Endothelial cell of umbilical vein (primary cell): ENCODE measurements at regions of chr1 and their contacts with region 1.

Region 1: DNA sequence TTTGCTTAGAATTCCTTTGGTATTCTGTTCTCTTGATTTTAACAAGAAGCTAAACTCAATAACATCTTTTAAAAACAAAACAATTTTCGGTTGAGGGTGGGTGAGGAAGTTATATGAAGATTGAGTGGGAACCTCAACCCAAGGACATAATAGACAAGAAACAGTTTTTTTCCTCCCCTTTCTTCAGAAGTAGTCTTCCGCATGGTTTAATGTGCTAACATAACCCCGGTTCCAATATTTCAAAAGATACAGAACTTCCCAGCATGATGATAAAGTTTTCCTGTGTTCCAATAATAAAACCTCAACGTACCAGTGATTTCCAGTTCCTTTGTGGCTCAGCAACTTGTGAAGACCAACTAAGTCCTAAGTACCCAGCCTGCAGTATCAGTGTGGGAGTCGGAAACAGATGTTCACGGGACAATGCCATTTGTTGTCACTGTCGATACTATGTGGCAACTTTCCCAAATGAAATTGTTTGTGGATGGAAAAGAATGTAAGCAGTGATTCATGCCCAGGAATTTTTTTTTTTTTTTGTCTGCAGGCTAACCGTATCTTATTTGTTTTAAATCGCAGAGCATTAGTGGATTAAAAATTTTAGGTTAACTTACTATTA is 48.5 kb downstream of the NR5A2 start:
- DNase-seq: peak; percentile 99
- H3K4me3 ChIP-seq: peak overlapping the region in 1 of 3 experiments; percentile 50
- H3K27ac ChIP-seq: peak overlapping the region; percentile 94
- H3K4me1 ChIP-seq: peaks cover 45% of the 10 kb centered on the region
- H3K27me3 ChIP-seq: no peaks in the 10 kb centered on the region
- CTCF ChIP-seq: no peak
- POLR2A ChIP-seq: peak; percentile 53

Region 2: GRCh38 chr1:199691540-199691939 is 384.5 kb before region 1 on chr1:
- CTCF ChIA-PET with region 1: no interaction called
- POLR2A ChIA-PET with region 1: no interaction called
- dilution Hi-C with region 1: no loop called
- intact Hi-C with region 1: loop called (anchors 1 kb)
- DNase-seq: peak; percentile 98
- H3K4me3 ChIP-seq: no peak overlapping the region
- H3K27ac ChIP-seq: peak overlapping the region; percentile 89
- H3K4me1 ChIP-seq: peaks cover 49% of the 10 kb centered on the region
- H3K27me3 ChIP-seq: no peaks in the 10 kb centered on the region
- CTCF ChIP-seq: peak in 1 of 2 donors; percentile 5
- POLR2A ChIP-seq: peak; percentile 81

Region 3: GRCh38 chr1:199780948-199781347 is 295.1 kb before region 1 on chr1:
- CTCF ChIA-PET with region 1: no interaction called
- POLR2A ChIA-PET with region 1: no interaction called
- dilution Hi-C with region 1: no loop called
- intact Hi-C with region 1: loop called (anchors 1 kb)
- DNase-seq: peak; percentile 56
- H3K4me3 ChIP-seq: no peak overlapping the region
- H3K27ac ChIP-seq: peak overlapping the region; percentile 63
- H3K4me1 ChIP-seq: peaks cover 45% of the 10 kb centered on the region
- H3K27me3 ChIP-seq: no peaks in the 10 kb centered on the region
- CTCF ChIP-seq: no peak
- POLR2A ChIP-seq: no peak

Region 4: DNA sequence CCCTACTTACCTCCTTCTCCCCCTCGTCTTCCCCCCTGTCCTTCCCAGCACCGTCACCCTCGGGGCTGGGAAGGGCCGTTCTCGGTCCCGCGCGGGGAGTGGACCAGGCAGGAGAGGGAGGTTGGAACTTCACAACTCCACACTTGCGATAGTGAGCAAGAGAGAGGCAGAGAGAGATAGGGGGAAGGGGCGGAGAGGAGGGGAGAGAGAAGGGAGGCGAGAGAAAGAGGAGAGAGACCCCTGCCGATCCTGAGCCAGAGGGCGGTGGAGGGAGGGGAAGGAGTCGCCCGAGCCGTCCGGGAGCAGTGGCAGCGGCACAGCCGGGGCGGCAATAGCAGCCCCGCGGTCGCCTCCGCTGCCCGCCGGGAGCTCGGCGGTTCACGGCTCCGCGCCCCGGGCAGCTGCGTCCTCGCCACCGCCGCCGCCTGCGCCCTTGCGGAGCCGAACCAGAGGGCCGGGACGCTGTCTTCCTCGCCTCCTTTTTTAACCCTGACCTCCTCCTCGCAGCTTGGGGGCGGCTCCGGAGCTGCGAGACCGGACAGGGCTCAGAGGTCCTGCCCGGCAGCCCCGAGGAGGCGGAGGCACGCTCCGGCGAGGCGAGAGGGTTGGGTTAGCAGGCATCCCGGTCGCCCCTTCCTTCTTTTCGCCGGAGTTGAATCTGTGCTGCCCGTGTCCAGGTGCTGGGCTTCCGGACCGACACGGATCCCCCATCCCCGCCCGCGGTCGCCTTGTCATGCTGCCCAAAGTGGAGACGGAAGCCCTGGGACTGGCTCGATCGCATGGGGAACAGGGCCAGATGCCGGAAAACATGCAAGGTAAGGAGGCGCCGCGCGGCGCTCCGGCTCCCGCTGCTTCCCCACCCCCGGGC is 36.8 kb before region 1 on chr1:
- CTCF ChIA-PET with region 1: interaction called, 3 read pairs
- POLR2A ChIA-PET with region 1: interaction called, 3 read pairs
- dilution Hi-C with region 1: no loop called
- intact Hi-C with region 1: loop called (anchors 1 kb)
- DNase-seq: peak; percentile 65
- H3K4me3 ChIP-seq: peak overlapping the region; percentile 11 to 75 (median 59)
- H3K27ac ChIP-seq: no peak overlapping the region
- H3K4me1 ChIP-seq: peaks cover 22% of the 10 kb centered on the region
- H3K27me3 ChIP-seq: peaks cover 15 to 97% of the 10 kb centered on the region in 2 experiments
- CTCF ChIP-seq: no peak
- POLR2A ChIP-seq: no peak

Region 5: DNA sequence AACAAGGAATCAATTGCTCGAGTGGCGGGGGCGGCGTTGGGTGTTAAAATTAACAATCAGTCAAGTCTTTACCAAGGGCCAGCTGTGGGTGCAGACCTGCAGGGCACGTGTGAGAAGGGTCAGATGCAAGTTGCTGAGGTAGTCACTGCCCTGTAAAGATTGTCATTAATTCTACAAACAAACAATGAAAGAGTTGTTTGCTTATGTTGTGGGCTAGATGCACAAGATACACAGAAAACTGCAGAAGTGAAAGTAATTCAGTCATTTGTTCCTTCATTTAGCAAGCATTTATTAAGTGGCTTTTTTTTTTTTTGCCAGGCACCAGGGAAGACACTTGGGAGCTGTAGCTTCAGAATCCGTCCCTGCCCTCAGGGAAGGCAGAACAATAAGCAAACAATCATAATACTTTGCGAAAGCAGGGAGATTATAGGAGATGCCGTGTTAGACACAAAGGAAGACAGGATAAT is 31.0 kb after region 1 on chr1:
- CTCF ChIA-PET with region 1: no interaction called
- POLR2A ChIA-PET with region 1: no interaction called
- dilution Hi-C with region 1: no loop called
- intact Hi-C with region 1: no loop called
- DNase-seq: no peak
- H3K4me3 ChIP-seq: no peak overlapping the region
- H3K27ac ChIP-seq: no peak overlapping the region
- H3K4me1 ChIP-seq: no peaks in the 10 kb centered on the region
- H3K27me3 ChIP-seq: no peaks in the 10 kb centered on the region
- CTCF ChIP-seq: no peak
- POLR2A ChIP-seq: no peak

Region 6: DNA sequence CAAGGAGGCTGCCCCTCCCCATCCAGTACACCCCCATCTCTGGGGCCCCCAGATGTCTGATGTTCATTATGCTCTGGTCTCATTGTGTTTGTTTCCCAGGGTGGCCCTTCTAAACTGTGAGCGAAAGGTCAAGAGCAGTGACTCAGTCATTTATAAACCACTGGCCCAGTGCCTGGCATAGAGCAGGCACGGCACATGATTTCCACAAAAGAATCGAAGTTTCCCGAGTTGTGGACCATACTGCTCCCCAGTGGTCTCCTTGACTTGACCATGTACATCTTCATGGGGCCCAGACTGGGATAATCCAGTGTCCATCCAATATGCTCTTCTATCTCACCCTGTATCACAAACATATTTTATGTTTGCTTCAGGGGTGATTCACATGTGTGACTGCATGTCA is 104.8 kb after region 1 on chr1:
- CTCF ChIA-PET with region 1: interaction called, 3 read pairs
- POLR2A ChIA-PET with region 1: no interaction called
- dilution Hi-C with region 1: no loop called
- intact Hi-C with region 1: loop called (anchors 1 kb)
- DNase-seq: peak; percentile 78
- H3K4me3 ChIP-seq: no peak overlapping the region
- H3K27ac ChIP-seq: no peak overlapping the region
- H3K4me1 ChIP-seq: peaks cover 31% of the 10 kb centered on the region
- H3K27me3 ChIP-seq: no peaks in the 10 kb centered on the region
- CTCF ChIP-seq: no peak
- POLR2A ChIP-seq: no peak

Region 7: DNA sequence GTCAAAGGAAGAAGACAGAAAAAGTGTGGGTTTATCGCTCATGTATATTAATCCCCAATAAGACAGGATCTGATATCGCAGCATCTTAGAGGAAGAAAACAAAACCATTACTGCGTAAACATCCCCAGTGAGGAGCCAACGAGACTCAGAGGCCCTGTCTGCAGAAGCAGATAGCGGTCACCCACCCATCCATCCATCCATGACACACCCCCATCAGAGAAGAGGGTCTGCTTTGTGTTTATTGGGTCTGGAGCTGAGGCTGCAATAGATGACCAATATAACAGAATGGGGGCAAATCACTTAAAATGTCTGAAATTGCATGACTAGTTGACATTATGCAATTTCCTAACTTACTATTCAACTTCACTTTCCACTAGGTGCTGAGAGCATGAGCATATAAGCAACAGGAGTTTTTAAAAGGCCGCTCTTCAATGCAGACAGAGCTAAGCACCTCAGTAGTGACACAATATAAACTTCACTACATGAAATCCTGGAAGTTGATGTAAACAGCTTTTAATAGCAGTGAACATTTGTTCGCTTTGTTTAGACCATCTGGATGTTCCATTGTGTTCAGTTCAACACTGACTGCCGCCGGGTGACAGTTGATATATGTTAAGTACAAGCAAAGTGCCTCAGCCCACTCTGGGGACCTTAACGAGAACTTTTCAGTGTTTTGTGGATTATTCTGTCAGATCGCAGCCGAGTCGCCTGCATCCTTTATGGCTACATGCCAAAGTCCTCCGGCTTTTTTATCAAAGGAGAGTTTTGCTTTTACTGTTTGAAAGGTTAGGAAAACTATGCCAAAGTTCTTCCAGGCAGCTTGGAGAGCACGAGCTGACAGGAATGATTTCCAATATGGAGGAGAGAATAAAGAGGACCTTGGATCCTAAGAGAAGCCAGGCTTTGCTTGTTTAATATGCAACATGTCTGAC is 166.3 kb after region 1 on chr1:
- CTCF ChIA-PET with region 1: no interaction called
- POLR2A ChIA-PET with region 1: no interaction called
- dilution Hi-C with region 1: no loop called
- intact Hi-C with region 1: loop called (anchors 2 kb)
- DNase-seq: peak; percentile 78
- H3K4me3 ChIP-seq: peak overlapping the region in 1 of 3 experiments; percentile 26
- H3K27ac ChIP-seq: peak overlapping the region; percentile 40
- H3K4me1 ChIP-seq: peaks cover 22% of the 10 kb centered on the region
- H3K27me3 ChIP-seq: peaks cover 0 to 4% of the 10 kb centered on the region in 2 experiments
- CTCF ChIP-seq: no peak
- POLR2A ChIP-seq: no peak

Region 8: DNA sequence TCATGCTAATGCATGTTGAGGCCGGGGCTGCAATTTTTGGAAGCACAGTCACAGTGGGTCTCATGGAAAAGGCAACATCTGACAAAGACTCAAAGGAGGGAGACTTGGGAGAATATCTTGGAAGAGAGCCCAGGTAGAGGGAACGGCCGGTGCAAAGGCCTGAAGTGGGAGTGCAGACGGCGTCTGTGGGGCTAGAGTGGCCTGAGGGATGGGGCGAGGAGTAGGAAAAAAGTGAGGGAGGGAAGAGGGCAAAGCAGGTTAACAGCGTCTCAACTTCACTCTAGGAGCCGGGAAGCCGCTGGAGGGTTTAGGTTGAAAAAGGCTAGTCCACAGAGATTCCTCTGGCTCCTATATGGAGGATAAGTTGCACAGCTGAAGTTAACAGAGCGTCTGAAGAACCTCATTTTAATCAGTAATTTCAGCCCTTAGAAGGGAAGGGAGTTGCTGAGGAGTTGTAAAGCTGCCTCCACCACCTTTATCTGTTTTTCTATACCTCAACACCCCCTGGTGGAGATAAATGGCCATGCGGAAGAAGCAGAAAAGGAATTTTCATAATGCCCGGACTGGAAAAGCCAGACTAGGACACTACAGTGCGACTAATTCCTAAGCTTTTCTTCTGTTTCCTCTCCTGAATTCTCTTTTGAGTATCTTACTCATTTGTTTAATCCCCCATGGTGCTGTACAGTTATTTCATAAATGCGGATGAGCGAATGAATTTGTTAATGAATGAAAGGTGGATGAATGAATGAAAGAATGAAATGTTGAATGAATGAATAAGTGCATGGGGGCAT is 412.5 kb after region 1 on chr1:
- CTCF ChIA-PET with region 1: no interaction called
- POLR2A ChIA-PET with region 1: no interaction called
- dilution Hi-C with region 1: no loop called
- intact Hi-C with region 1: loop called (anchors 2 kb)
- DNase-seq: peak; percentile 72
- H3K4me3 ChIP-seq: no peak overlapping the region
- H3K27ac ChIP-seq: no peak overlapping the region
- H3K4me1 ChIP-seq: peaks cover 10% of the 10 kb centered on the region
- H3K27me3 ChIP-seq: peaks cover 0 to 2% of the 10 kb centered on the region in 2 experiments
- CTCF ChIP-seq: peak; percentile 71 to 73
- POLR2A ChIP-seq: no peak